Heart right ventricle (tissue), 16 donors: ENCODE measurements at regions of chr14 and their contacts with region 1.

Region 1: GRCh38 chr14:64841121-64841651 is 38.5 kb downstream of the SPTB start:
- DNase-seq: peak in 1 of 2 donors; percentile 48
- ATAC-seq: peak; percentile 67 to 89 (median 81)
- H3K4me3 ChIP-seq: peak overlapping the region in 6 of 10 donors; percentile 7 to 37 (median 26)
- H3K27ac ChIP-seq: peak overlapping the region; percentile 43 to 90 (median 83)
- H3K4me1 ChIP-seq: peaks cover 0 to 52% (median 18%) of the 10 kb centered on the region in 9 donors
- H3K27me3 ChIP-seq: peaks cover 0 to 29% (median 8%) of the 10 kb centered on the region in 7 donors
- CTCF ChIP-seq: peak in 7 of 9 donors; percentile 13 to 51 (median 41)

Region 2: DNA sequence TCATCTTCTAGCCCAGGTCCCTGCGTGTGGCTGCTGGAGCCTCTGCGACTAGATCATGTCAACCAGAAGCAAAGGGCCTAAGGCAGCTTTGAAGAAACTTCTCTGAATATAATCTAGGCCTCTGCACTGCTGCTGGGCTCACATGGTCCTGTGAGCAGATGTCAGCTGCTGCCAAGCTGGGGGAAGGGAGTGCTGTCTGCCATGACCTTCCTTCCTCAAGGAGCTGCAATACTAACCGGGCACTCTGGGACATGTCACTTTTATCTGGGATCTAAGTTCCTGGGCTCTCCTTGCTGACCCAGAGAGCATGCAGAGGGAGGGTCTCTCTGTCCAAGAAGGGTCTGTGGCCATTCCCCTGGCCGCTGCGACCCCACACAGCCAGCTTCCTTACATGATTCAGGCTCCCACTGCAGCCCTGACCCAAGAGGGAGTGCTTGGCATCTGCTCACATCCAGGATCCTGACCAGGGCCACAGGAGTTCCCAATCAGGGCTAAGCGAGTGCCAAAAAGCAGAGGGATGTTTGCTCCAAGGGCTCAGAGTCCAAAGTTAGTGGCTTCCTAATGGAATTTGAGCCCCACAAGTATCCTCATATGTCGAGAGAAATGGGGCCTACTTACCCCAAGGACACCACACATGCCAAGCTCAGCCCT is 63.0 kb before region 1 on chr14:
- intact Hi-C with region 1: no loop called
- DNase-seq: peak in 1 of 2 donors; percentile 47
- ATAC-seq: peak; percentile 70 to 81 (median 77)
- H3K4me3 ChIP-seq: no peak overlapping the region
- H3K27ac ChIP-seq: peak overlapping the region; percentile 29 to 82 (median 70)
- H3K4me1 ChIP-seq: peaks cover 3 to 40% (median 27%) of the 10 kb centered on the region in 9 donors
- H3K27me3 ChIP-seq: no peaks in the 10 kb centered on the region
- CTCF ChIP-seq: no peak

Region 3: GRCh38 chr14:65003394-65003793 is 162.2 kb after region 1 on chr14:
- intact Hi-C with region 1: no loop called
- DNase-seq: no peak
- ATAC-seq: no peak
- H3K4me3 ChIP-seq: no peak overlapping the region
- H3K27ac ChIP-seq: no peak overlapping the region
- H3K4me1 ChIP-seq: peaks cover 0 to 23% (median 6%) of the 10 kb centered on the region in 9 donors
- H3K27me3 ChIP-seq: no peaks in the 10 kb centered on the region
- CTCF ChIP-seq: no peak

Region 4: GRCh38 chr14:65042731-65043372 is 201.7 kb after region 1 on chr14:
- intact Hi-C with region 1: no loop called
- DNase-seq: no peak
- ATAC-seq: peak in 2 of 8 donors; percentile 43 to 52
- H3K4me3 ChIP-seq: no peak overlapping the region
- H3K27ac ChIP-seq: peak overlapping the region in 1 of 10 donors; percentile 75
- H3K4me1 ChIP-seq: peaks cover 0 to 50% (median 18%) of the 10 kb centered on the region in 9 donors
- H3K27me3 ChIP-seq: no peaks in the 10 kb centered on the region
- CTCF ChIP-seq: no peak

Region 5: GRCh38 chr14:66758031-66758613 is 1916.9 kb after region 1 on chr14:
- intact Hi-C with region 1: loop called in 1 of 10 experiments (anchors 10 kb)
- DNase-seq: no peak
- ATAC-seq: no peak
- H3K4me3 ChIP-seq: no peak overlapping the region
- H3K27ac ChIP-seq: no peak overlapping the region
- H3K4me1 ChIP-seq: no peaks in the 10 kb centered on the region
- H3K27me3 ChIP-seq: no peaks in the 10 kb centered on the region
- CTCF ChIP-seq: no peak